Posterior cingulate gyrus (tissue), 11 donors: ENCODE measurements at regions of chr2 and their contacts with region 1.

Region 1: DNA sequence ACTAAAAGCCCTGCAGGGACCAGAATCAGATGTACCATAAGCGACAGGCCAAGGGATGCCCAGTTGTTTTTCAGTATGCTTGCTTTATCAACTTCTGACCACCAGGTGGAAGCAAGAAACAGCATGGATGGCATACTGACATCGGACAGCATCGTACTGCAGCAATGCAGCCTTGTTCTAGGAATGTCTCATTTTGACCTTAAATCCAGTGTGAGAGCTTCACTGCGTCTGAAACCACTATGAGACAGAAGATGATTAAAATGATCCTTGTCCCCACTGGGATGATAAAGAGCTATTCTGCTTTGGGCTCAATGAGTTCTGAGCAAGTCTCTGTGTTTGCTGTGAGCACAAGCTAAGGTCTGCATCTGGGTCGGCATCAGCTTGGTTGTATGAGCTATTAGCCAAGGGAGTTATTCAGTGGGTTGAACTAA is 54.3 kb downstream of the CDK15 start:
- DNase-seq: peak in 5 of 10 donors; percentile 35 to 84 (median 41)

Region 2: GRCh38 chr2:202033321-202034248 is 172.9 kb after region 1 on chr2 and contains the start of gene FZD7:
- intact Hi-C with region 1: loop called (anchors 5 kb)
- DNase-seq: peak; percentile 70 to 95 (median 80)